BJ (cell line): ENCODE measurements at regions of chr17 and their contacts with region 1.

Region 1: GRCh38 chr17:50114849-50115357 is 15.1 kb downstream of the SAMD14 start:
- DNase-seq: no peak
- H3K4me3 ChIP-seq: no peak overlapping the region
- H3K27me3 ChIP-seq: peaks cover 2% of the 10 kb centered on the region
- CTCF ChIP-seq: peak; percentile 75

Region 2: DNA sequence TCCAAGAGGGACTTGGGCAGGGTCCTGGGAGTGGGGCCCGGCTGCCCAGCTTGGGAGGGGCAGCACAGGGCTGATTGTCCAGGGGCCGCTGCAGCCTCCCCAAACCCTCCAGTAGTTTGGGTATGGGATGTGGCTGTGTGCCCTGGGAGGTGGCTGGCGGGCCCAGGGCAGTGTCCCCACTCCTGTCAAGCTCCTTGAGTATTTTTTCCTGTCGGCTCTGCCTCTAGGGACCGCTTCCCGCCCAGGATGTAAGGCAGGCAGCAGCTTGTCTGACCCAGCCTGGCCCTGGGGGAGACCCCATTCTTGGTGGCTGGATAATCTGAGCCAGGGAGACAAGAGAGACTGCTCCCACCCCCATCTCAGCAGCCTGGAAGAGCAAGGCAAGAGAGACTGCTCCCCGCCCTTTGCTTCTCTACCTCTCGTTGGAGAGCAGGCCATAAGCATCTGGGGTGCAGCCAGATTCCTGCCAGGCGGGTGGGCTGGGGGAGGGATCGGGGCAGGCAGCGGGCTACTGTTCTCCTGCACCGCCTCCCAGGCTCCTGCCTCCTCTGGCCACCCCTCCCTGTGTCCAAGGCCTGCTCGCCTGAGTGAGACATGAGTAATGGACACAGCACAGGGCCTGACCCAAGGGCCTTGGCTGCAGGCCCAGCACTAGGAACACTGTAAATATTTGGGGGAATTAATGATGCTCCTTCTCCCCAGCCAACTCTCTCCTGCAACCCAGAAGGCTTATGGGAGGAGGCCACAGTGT is 77.4 kb before region 1 on chr17:
- CTCF ChIA-PET with region 1: no interaction called
- POLR2A ChIA-PET with region 1: no interaction called
- DNase-seq: no peak
- H3K4me3 ChIP-seq: no peak overlapping the region
- H3K27me3 ChIP-seq: no peaks in the 10 kb centered on the region
- CTCF ChIP-seq: no peak

Region 3: GRCh38 chr17:50101346-50102163 is 13.3 kb before region 1 on chr17:
- CTCF ChIA-PET with region 1: interaction called, 17 read pairs
- POLR2A ChIA-PET with region 1: no interaction called
- DNase-seq: no peak
- H3K4me3 ChIP-seq: no peak overlapping the region
- H3K27me3 ChIP-seq: no peaks in the 10 kb centered on the region
- CTCF ChIP-seq: no peak; the same call in 1 of the 2 replicates

Region 4: DNA sequence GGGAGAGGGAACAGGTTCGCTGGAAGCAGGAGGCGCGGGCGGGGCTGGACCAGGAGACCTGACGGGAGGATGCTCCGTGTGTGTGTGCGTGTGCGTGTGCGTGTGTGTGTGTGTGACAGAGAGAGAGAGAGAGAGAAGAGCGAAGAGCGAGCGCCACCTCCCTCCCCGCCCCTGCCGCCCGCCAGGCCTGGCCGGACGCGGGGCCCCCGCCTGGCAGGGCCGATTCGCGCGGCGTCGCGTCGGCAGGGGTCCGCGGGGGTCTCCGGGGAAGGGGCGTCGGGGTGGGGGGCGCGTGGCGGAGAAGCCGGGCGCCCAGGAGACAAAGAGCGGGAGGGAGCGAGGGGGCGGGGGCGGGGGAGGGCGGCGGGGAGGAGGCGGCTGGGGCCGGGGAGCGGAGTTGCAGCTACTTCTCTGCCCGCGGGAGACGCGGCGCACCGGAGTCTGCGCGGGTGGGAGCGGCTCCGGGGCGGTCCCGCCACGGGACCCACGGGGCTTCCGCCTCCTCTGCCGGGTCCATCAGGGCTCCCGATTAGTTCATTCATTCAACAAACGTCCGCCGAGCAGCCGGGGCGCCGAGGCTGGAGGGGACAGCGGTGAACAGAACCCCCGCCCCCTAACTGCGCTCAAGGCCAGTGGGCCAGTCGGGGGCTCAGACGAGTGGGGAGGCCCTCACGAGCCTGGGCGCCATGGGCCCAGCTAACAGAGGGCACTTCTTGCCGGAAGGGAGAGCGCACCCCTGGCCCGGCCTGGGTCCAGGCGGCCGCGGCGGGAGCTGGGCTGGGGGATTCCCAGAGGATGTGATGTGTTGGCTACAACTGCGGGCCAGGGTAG is 15.0 kb after region 1 on chr17 and contains the start of gene SAMD14:
- CTCF ChIA-PET with region 1: interaction called, 12 read pairs
- POLR2A ChIA-PET with region 1: no interaction called
- DNase-seq: no peak
- H3K4me3 ChIP-seq: peak within 1 kb of the TSS; percentile 54
- H3K27me3 ChIP-seq: no peaks in the 10 kb centered on the region
- CTCF ChIP-seq: no peak
- polyA plus RNA-seq, gene SAMD14: 2.7 and 5.3 TPM in 2 replicates

Region 5: GRCh38 chr17:50431233-50431632 is 316.3 kb after region 1 on chr17:
- CTCF ChIA-PET with region 1: no interaction called
- POLR2A ChIA-PET with region 1: no interaction called
- DNase-seq: no peak
- H3K4me3 ChIP-seq: no peak overlapping the region
- H3K27me3 ChIP-seq: no peaks in the 10 kb centered on the region
- CTCF ChIP-seq: no peak